ENCODE measurements at regions of chr9 and their contacts with region 1.

Region 1: DNA sequence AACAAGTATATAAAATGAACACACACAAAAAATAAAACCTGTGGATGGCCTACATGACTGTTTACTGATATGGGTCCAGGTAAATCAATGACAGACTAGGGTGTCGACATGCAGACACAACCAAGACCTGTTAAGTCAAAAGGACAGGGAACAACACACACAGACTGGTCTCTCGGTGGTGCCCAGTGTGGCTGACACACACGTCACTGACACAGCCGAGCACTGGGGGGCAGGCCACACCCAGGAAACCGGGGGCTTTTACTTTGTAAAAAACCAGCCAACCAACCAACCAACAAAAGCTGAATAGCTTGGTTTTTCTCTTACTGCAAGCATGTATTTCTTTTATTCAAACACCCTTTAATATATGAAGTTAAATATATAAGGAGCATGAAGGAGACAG is 5.0 kb downstream of the FAM163B start:
- DNase-seq: peak in 1 of 2 experiments; percentile 38
- H3K4me3 ChIP-seq: no peak overlapping the region
- H3K4me3 Mint-ChIP-seq: no peak overlapping the region
- H3K27ac Mint-ChIP-seq: no peak overlapping the region
- H3K4me1 ChIP-seq: no peaks in the 10 kb centered on the region
- H3K4me1 Mint-ChIP-seq: no peaks in the 10 kb centered on the region
- H3K27me3 ChIP-seq: no peaks in the 10 kb centered on the region; the same call in none of the 2 replicates
- H3K27me3 Mint-ChIP-seq: peaks cover 7% of the 10 kb centered on the region
- CTCF ChIP-seq: peak in 1 of 2 experiments; percentile 30

Region 2: GRCh38 chr9:133691626-133692363 is 87.6 kb after region 1 on chr9:
- CTCF ChIA-PET with region 1: no interaction called
- POLR2A ChIA-PET with region 1: no interaction called
- intact Hi-C with region 1: no loop called
- DNase-seq: no peak
- H3K4me3 ChIP-seq: no peak overlapping the region
- H3K4me3 Mint-ChIP-seq: no peak overlapping the region
- H3K27ac Mint-ChIP-seq: peak overlapping the region; percentile 69
- H3K4me1 ChIP-seq: peaks cover 35% of the 10 kb centered on the region
- H3K4me1 Mint-ChIP-seq: peaks cover 38% of the 10 kb centered on the region
- H3K27me3 ChIP-seq: no peaks in the 10 kb centered on the region
- H3K27me3 Mint-ChIP-seq: peaks cover 8% of the 10 kb centered on the region
- CTCF ChIP-seq: no peak

Region 3: GRCh38 chr9:133726401-133727276 is 122.4 kb after region 1 on chr9:
- CTCF ChIA-PET with region 1: interaction called, 6 read pairs
- POLR2A ChIA-PET with region 1: no interaction called
- intact Hi-C with region 1: loop called (anchors 2 kb)
- DNase-seq: peak; percentile 75 to 80
- H3K4me3 ChIP-seq: no peak overlapping the region
- H3K4me3 Mint-ChIP-seq: no peak overlapping the region
- H3K27ac Mint-ChIP-seq: no peak overlapping the region
- H3K4me1 ChIP-seq: no peaks in the 10 kb centered on the region
- H3K4me1 Mint-ChIP-seq: peaks cover 4% of the 10 kb centered on the region
- H3K27me3 ChIP-seq: no peaks in the 10 kb centered on the region
- H3K27me3 Mint-ChIP-seq: peaks cover 9% of the 10 kb centered on the region
- CTCF ChIP-seq: peak; percentile 75 to 85